MCF 10A (cell line): ENCODE measurements at regions of chr16 and their contacts with region 1.

Region 1: GRCh38 chr16:57091975-57092785 is at the start of gene CPNE2:
- DNase-seq: peak; percentile 44
- H3K4me3 Mint-ChIP-seq: peak within 1 kb of the TSS; percentile 69
- H3K27ac Mint-ChIP-seq: no peak within 1 kb of the TSS
- H3K4me1 Mint-ChIP-seq: no peaks in the 10 kb centered on the region
- H3K27me3 Mint-ChIP-seq: no peaks in the 10 kb centered on the region
- CTCF ChIP-seq: peak; percentile 9
- total RNA-seq, gene CPNE2: 6.7 and 9.6 TPM in 2 replicates

Region 2: GRCh38 chr16:57061084-57061905 is 30.9 kb before region 1 on chr16:
- CTCF ChIA-PET with region 1: interaction called, 10 read pairs
- POLR2A ChIA-PET with region 1: no interaction called
- intact Hi-C with region 1: no loop called
- DNase-seq: peak; percentile 76
- H3K4me3 Mint-ChIP-seq: no peak overlapping the region
- H3K27ac Mint-ChIP-seq: peak overlapping the region; percentile 75
- H3K4me1 Mint-ChIP-seq: peaks cover 20% of the 10 kb centered on the region
- H3K27me3 Mint-ChIP-seq: no peaks in the 10 kb centered on the region
- CTCF ChIP-seq: no peak

Region 3: DNA sequence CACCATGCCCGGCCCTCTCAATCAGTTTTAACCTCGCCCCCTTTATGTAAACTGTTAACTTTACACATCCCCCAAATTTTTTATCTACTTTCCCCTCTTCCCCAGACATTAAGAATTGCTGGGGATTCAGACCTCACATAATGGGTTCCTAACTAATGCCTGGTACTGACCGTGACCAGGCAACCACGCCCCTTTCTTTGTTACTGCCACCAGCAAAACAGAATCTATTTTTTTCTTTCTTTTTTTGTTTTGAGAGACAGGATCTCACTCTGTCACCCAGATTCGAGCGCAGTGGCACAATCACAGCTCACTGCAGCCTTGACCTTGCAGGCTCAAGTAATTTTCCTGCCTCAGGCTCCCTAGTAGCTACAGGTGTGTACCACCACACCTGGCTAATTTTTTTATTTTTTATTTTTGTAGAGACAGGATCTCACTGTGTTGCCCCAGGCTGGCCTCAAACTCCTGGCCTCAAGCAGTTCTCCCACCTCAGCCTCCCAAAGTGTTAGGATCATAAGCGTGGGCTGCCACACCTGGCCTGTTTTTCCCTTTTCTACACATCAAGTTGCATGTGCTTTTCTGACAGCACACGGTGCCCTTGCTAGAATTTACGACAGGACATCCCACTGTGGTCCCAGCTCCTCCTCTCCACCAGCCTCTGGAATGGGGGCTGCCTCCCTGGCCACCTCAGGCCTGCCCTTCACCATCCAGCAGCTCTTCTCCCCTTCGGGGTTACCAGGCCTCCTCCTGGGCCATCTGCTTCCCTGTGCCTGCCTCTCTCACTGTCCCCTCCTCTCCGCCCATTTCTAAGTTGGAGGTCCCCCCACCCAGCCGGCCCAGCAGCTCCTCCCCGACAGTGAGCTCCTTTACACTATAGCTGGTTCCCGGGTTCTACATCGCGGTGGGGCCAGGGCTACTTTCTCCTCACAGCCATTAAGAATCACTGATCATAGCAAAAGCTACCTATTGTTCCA is 11.0 kb after region 1 on chr16:
- CTCF ChIA-PET with region 1: interaction called, 15 read pairs
- POLR2A ChIA-PET with region 1: no interaction called
- intact Hi-C with region 1: no loop called
- DNase-seq: no peak
- H3K4me3 Mint-ChIP-seq: no peak overlapping the region
- H3K27ac Mint-ChIP-seq: no peak overlapping the region
- H3K4me1 Mint-ChIP-seq: peaks cover 26% of the 10 kb centered on the region
- H3K27me3 Mint-ChIP-seq: no peaks in the 10 kb centered on the region
- CTCF ChIP-seq: no peak

Region 4: GRCh38 chr16:57304169-57305061 is 212.2 kb after region 1 on chr16:
- CTCF ChIA-PET with region 1: no interaction called
- POLR2A ChIA-PET with region 1: no interaction called
- intact Hi-C with region 1: no loop called
- DNase-seq: peak; percentile 55
- H3K4me3 Mint-ChIP-seq: no peak overlapping the region
- H3K27ac Mint-ChIP-seq: no peak overlapping the region
- H3K4me1 Mint-ChIP-seq: peaks cover 6% of the 10 kb centered on the region
- H3K27me3 Mint-ChIP-seq: peaks cover 10% of the 10 kb centered on the region
- CTCF ChIP-seq: no peak